Activated CD8-positive, alpha-beta T cell treated with anti-CD3 and anti-CD28 coated beads, Interleukin-2, amount 10 ng/mL, durations not matched to agents 7 days and 5 days (primary cell): ENCODE measurements at regions of chr10 and their contacts with region 1.

Region 1: GRCh38 chr10:71708301-71708703 is 11.3 kb downstream of the C10orf105 start:
- DNase-seq: peak; percentile 68
- ATAC-seq: peak; percentile 42
- H3K4me3 Mint-ChIP-seq: no peak overlapping the region
- H3K27ac Mint-ChIP-seq: peak overlapping the region; percentile 55
- H3K4me1 Mint-ChIP-seq: peaks cover 55% of the 10 kb centered on the region
- H3K27me3 Mint-ChIP-seq: no peaks in the 10 kb centered on the region

Region 2: DNA sequence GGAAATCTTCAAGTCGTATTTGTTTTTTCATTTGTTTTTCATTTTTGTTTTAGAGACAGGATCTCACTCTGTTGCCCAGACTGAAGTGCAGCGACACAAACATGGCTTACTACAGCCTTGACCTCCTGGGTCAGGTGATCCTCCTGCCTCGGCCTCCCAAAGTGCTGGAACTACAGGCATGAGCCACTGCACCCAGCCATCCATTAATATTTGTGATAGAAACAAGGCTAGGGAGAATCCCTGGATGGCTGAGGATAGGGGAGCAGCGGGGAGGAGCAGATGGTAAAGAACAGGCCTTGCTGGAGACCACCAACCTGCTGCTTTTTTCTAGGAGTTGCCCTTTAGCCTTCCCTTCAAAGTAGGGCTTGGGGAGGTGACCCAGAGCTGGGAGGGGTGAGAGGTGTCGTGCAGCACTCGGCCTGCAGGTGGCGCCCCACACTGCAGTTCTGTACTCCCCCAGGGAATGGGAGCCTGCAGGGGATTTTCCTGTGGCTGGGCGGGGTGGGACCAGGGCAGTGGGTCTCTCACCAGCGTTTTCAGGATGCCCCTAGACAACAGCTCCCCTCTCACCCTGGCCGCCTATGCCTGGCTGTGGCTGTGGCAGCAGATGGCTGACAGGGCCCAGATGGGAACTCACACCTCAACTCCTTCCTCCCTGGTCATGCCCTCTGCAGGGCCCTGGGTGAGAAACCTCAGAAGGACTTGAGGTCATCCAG is 324.2 kb before region 1 on chr10:
- CTCF ChIA-PET with region 1: interaction called, 11 read pairs
- POLR2A ChIA-PET with region 1: no interaction called
- DNase-seq: peak; percentile 77
- ATAC-seq: peak; percentile 95
- H3K4me3 Mint-ChIP-seq: no peak overlapping the region
- H3K27ac Mint-ChIP-seq: no peak overlapping the region
- H3K4me1 Mint-ChIP-seq: no peaks in the 10 kb centered on the region
- H3K27me3 Mint-ChIP-seq: peaks cover 9% of the 10 kb centered on the region

Region 3: GRCh38 chr10:71663311-71663710 is 45.0 kb before region 1 on chr10:
- CTCF ChIA-PET with region 1: interaction called, 10 read pairs
- POLR2A ChIA-PET with region 1: no interaction called
- DNase-seq: no peak
- ATAC-seq: no peak
- H3K4me3 Mint-ChIP-seq: no peak overlapping the region
- H3K27ac Mint-ChIP-seq: no peak overlapping the region
- H3K4me1 Mint-ChIP-seq: peaks cover 29% of the 10 kb centered on the region
- H3K27me3 Mint-ChIP-seq: peaks cover 4% of the 10 kb centered on the region

Region 4: GRCh38 chr10:71756311-71757191 is 48.2 kb after region 1 on chr10:
- CTCF ChIA-PET with region 1: interaction called, 11 read pairs
- POLR2A ChIA-PET with region 1: interaction called, 5 read pairs
- DNase-seq: no peak
- ATAC-seq: peak; percentile 53
- H3K4me3 Mint-ChIP-seq: peak overlapping the region; percentile 57
- H3K27ac Mint-ChIP-seq: peak overlapping the region; percentile 91
- H3K4me1 Mint-ChIP-seq: peaks cover 86% of the 10 kb centered on the region
- H3K27me3 Mint-ChIP-seq: no peaks in the 10 kb centered on the region

Region 5: DNA sequence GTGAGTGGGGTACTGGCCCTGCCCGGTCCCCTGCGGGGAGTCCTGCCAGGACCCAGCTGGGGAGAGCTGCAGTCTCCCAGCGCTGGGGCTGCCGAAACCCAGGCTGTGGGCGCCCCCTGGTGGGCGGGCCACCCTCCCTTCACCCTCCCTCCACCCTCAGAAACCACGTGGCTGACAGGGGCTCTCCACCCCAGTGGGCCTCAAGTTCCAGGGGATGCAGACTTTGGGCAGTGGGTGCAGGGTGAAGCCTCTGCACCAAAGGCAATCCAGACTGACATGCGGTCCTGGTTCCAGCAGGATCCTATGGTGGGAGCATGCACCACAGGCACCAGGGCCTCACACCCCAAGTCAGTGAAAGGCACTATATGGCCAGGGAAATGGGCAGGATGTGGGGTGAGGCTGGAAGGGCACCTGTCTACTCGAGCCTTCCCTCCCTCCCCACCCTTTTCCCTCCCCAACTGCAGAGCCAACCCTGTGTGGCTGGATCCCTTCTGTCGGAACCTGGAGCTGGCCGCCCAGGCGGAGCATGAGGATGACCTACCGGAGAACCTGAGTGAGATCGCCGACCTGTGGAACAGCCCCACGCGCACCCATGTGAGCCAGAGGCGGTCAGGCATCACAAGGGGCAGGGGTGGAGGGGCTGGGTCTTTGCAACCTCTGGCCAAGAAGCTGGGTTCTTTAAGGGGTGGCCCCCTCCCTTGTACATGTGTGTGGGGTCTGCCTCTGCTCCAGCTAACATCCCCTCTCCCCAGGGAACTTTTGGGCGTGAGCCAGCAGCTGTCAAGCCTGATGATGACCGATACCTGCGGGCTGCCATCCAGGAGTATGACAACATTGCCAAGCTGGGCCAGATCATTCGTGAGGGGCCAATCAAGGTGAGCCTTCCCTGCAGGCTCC is 104.0 kb after region 1 on chr10:
- CTCF ChIA-PET with region 1: interaction called, 10 read pairs
- POLR2A ChIA-PET with region 1: no interaction called
- DNase-seq: peak; percentile 87
- ATAC-seq: peak; percentile 97
- H3K4me3 Mint-ChIP-seq: no peak overlapping the region
- H3K27ac Mint-ChIP-seq: peak overlapping the region; percentile 51
- H3K4me1 Mint-ChIP-seq: peaks cover 21% of the 10 kb centered on the region
- H3K27me3 Mint-ChIP-seq: no peaks in the 10 kb centered on the region